CD4-positive, alpha-beta memory T cell (primary cell): ENCODE measurements at regions of chr1 and their contacts with region 1.

Region 1: DNA sequence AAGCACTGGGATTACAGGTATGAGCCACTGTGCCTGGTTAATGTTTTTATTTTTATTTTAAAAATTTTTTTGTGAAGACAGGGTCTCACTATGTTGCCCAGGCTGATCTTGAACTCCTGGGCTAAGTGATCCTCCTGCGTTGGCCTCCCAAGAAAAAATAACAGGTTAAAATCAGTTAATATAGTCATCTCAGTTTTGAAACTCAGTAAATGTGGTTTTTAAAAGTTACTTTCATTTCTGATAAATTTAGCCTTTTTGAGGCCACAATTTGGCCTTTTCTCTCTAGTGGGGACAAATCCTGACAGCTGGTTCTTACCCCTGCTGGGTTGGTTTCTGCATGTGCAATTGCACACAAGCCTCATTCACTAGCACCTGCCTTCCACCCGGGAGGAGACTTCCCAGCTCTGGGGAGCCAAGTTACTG is 13.3 kb downstream of the PMF1 start:
- DNase-seq: no peak
- H3K4me3 ChIP-seq: no peak overlapping the region
- H3K4me3 Mint-ChIP-seq: no peak overlapping the region
- H3K27ac ChIP-seq: no peak overlapping the region
- H3K27ac Mint-ChIP-seq: peak overlapping the region in 3 of 7 donors; percentile 68 to 79 (median 78)
- H3K4me1 ChIP-seq: peaks cover 6% of the 10 kb centered on the region
- H3K4me1 Mint-ChIP-seq: peaks cover 22 to 39% (median 29%) of the 10 kb centered on the region in 4 donors
- H3K27me3 ChIP-seq: no peaks in the 10 kb centered on the region
- H3K27me3 Mint-ChIP-seq: no peaks in the 10 kb centered on the region

Region 2: GRCh38 chr1:156096640-156097391 is 129.3 kb before region 1 on chr1:
- CTCF ChIA-PET with region 1: interaction called, 121 read pairs
- POLR2A ChIA-PET with region 1: interaction called, 3 read pairs
- intact Hi-C with region 1: loop called (anchors 1 kb)
- DNase-seq: peak; percentile 88 to 98 (median 91)
- H3K4me3 ChIP-seq: peak overlapping the region in 1 of 2 donors; percentile 39
- H3K4me3 Mint-ChIP-seq: peak overlapping the region; percentile 39 to 85 (median 78)
- H3K27ac ChIP-seq: peak overlapping the region; percentile 78
- H3K27ac Mint-ChIP-seq: peak overlapping the region; percentile 90 to 100 (median 99)
- H3K4me1 ChIP-seq: peaks cover 37% of the 10 kb centered on the region
- H3K4me1 Mint-ChIP-seq: peaks cover 42 to 59% (median 48%) of the 10 kb centered on the region in 4 donors
- H3K27me3 ChIP-seq: no peaks in the 10 kb centered on the region
- H3K27me3 Mint-ChIP-seq: peaks cover 3 to 4% of the 10 kb centered on the region in 2 donors

Region 3: GRCh38 chr1:156146020-156146768 is 79.9 kb before region 1 on chr1:
- CTCF ChIA-PET with region 1: interaction called, 189 read pairs
- POLR2A ChIA-PET with region 1: interaction called, 10 read pairs
- intact Hi-C with region 1: loop called (anchors 1 kb)
- DNase-seq: peak; percentile 61 to 76 (median 73)
- H3K4me3 ChIP-seq: no peak overlapping the region
- H3K4me3 Mint-ChIP-seq: peak overlapping the region; percentile 60 to 87 (median 76)
- H3K27ac ChIP-seq: no peak overlapping the region
- H3K27ac Mint-ChIP-seq: peak overlapping the region in 6 of 7 donors; percentile 72 to 92 (median 80)
- H3K4me1 ChIP-seq: peaks cover 11% of the 10 kb centered on the region
- H3K4me1 Mint-ChIP-seq: peaks cover 8 to 22% (median 13%) of the 10 kb centered on the region in 4 donors
- H3K27me3 ChIP-seq: no peaks in the 10 kb centered on the region
- H3K27me3 Mint-ChIP-seq: peaks cover 0 to 3% of the 10 kb centered on the region in 2 donors

Region 4: DNA sequence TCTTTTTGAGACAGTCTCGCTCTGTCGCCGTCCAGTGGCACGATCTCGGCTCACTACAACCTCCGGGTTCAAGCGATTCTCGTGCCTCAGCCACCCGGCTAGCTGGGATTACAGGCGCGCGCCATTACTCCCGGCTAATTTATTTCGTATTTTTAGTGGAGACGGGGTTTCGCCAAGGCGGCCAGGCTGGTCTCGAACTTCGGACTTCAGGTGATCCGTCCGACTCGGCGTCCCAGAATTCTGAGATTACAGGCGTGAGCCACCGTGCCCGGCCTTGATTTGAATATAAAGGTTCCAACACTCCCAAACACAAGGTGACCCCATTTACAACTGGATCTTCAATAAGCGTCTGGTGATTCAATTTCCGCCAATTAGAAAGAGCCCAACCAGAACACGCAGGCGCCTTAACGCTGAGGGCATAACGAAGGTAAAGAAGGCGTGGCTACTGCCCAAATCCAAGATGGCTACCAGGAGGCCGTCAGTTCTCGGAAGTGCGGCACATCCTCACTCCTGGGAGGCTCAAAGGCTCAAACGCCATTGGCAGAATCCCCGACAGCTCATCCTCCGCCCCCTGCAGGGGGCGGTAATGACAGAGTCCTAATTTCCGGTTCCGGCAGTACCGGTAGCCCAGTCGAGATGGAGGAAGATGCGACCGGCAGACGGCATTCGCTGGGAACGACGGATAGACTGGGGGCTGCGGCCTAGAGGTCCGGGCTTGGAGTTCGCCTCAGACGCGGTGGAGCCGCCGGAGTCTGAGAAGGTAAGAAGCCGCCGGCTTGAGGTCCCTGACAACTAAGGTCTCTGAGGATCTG is 32.4 kb before region 1 on chr1 and contains the start of gene SLC25A44:
- CTCF ChIA-PET with region 1: interaction called, 9 read pairs
- POLR2A ChIA-PET with region 1: interaction called, 5 read pairs
- intact Hi-C with region 1: loop called (anchors 5 kb)
- DNase-seq: peak; percentile 98 to 99 (median 98)
- H3K4me3 ChIP-seq: peak within 1 kb of the TSS; percentile 88 to 92
- H3K4me3 Mint-ChIP-seq: peak within 1 kb of the TSS; percentile 93 to 99 (median 96)
- H3K27ac ChIP-seq: peak within 1 kb of the TSS; percentile 79
- H3K27ac Mint-ChIP-seq: peak within 1 kb of the TSS; percentile 75 to 97 (median 96)
- H3K4me1 ChIP-seq: peaks cover 48% of the 10 kb centered on the region
- H3K4me1 Mint-ChIP-seq: peaks cover 26 to 58% (median 40%) of the 10 kb centered on the region in 4 donors
- H3K27me3 ChIP-seq: no peaks in the 10 kb centered on the region
- H3K27me3 Mint-ChIP-seq: no peaks in the 10 kb centered on the region
- total RNA-seq, gene SLC25A44: 21.2 to 23.3 TPM

Region 5: GRCh38 chr1:156319664-156320063 is 93.5 kb after region 1 on chr1:
- CTCF ChIA-PET with region 1: interaction called, 17 read pairs
- POLR2A ChIA-PET with region 1: no interaction called
- intact Hi-C with region 1: no loop called
- DNase-seq: peak in 3 of 5 donors; percentile 13 to 33 (median 27)
- H3K4me3 ChIP-seq: no peak overlapping the region
- H3K4me3 Mint-ChIP-seq: no peak overlapping the region
- H3K27ac ChIP-seq: no peak overlapping the region
- H3K27ac Mint-ChIP-seq: no peak overlapping the region
- H3K4me1 ChIP-seq: no peaks in the 10 kb centered on the region
- H3K4me1 Mint-ChIP-seq: peaks cover 0 to 2% (median 0%) of the 10 kb centered on the region in 4 donors
- H3K27me3 ChIP-seq: no peaks in the 10 kb centered on the region
- H3K27me3 Mint-ChIP-seq: no peaks in the 10 kb centered on the region

Region 6: DNA sequence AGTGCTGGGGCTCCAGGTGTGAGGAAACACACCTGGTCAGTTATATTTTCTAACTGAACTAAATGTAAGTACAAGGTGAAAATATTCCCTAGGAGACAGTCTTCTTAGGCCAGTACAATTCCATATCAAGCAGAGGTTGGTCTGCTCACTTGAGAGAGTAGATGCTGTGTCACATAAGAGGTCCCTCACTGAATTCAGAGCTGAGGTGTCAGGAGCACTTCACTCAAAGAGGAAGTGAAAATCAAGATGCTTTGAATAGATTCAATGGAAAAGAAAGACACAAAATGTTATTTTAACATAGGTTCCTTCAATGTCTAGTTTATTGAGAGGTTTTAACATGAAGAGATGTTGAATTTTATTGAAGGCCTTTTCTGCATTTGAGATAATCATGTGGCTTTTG is 1478.8 kb after region 1 on chr1:
- CTCF ChIA-PET with region 1: no interaction called
- POLR2A ChIA-PET with region 1: no interaction called
- intact Hi-C with region 1: no loop called
- DNase-seq: no peak
- H3K4me3 ChIP-seq: no peak overlapping the region
- H3K4me3 Mint-ChIP-seq: no peak overlapping the region
- H3K27ac ChIP-seq: no peak overlapping the region
- H3K27ac Mint-ChIP-seq: no peak overlapping the region
- H3K4me1 ChIP-seq: no peaks in the 10 kb centered on the region
- H3K4me1 Mint-ChIP-seq: no peaks in the 10 kb centered on the region
- H3K27me3 ChIP-seq: no peaks in the 10 kb centered on the region
- H3K27me3 Mint-ChIP-seq: peaks cover 2 to 11% of the 10 kb centered on the region in 2 donors